GM10248 (cell line): ENCODE measurements at regions of chr11 and their contacts with region 1.

Region 1: GRCh38 chr11:59135648-59136461 is 6.8 kb upstream of the FAM111A start:
- DNase-seq: peak; percentile 83
- CTCF ChIP-seq: peak; percentile 100

Region 2: GRCh38 chr11:58654079-58654907 is 481.6 kb before region 1 on chr11:
- CTCF ChIA-PET with region 1: interaction called, 13 read pairs
- POLR2A ChIA-PET with region 1: no interaction called
- DNase-seq: peak; percentile 69
- CTCF ChIP-seq: peak; percentile 93

Region 3: DNA sequence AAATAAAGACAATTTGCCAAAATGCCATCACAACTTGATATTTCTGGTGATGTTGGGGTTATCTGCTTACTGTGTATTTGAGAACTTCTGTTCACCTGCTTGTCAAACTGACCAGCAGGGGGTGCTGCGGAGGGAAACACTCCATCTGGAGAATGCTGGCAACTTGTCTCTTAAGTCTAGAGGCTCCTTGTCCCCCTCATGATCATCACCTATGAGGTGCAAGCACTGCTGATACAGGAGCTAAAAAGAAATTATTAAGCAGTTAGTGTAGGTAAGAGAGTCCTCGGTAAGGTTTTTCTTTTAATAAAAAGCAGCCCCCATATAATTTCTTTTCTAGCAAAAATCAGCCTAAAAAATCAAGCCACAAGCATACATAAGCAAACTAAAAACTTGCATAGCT is 82.5 kb before region 1 on chr11:
- CTCF ChIA-PET with region 1: interaction called, 28 read pairs
- POLR2A ChIA-PET with region 1: no interaction called
- DNase-seq: no peak
- CTCF ChIP-seq: peak; percentile 70

Region 4: GRCh38 chr11:59097113-59097708 is 38.6 kb before region 1 on chr11:
- CTCF ChIA-PET with region 1: interaction called, 15 read pairs
- POLR2A ChIA-PET with region 1: no interaction called
- DNase-seq: no peak
- CTCF ChIP-seq: peak; percentile 58

Region 5: DNA sequence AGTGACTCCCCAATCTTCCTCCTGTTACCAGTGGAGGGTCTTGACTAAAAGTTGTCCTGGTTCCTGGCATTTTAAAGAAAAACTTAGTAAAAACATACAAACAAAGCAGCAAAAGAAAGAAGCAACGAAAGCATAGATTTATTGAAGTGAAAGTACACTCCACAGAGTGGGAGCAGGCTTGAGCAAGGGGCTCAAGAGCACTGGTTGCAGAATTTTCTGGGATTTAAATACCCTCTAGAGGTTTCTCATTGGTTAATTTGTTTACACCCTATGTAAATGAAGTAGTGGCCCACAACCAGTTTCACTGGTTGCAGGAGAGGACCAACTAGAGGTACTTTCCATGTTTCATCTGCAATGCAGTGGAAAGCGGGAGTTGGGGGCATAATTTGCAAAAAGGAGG is 18.1 kb before region 1 on chr11:
- CTCF ChIA-PET with region 1: interaction called, 16 read pairs
- POLR2A ChIA-PET with region 1: no interaction called
- DNase-seq: no peak
- CTCF ChIP-seq: no peak